ENCODE measurements at regions of chr11 and their contacts with region 1.

Region 1: DNA sequence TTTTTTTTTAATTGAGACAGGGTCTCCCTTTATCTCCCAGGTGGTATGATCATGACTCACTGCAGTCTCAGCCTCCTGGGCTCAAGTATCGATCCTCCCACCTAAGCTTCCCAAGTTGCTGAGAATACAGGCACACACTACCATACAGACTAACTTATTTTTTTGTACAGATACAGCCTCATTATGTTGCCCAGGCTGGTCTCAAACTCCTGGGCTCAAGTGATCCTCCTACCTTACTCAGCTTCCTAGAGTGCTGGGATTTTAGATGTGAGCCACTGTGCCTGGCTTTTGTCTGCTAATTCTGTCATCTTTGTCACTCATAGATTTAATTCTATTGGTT is 43.5 kb downstream of the CBL start:
- DNase-seq: peak; percentile 17
- ATAC-seq: no peak
- H3K4me3 ChIP-seq: no peak overlapping the region
- H3K27ac ChIP-seq: no peak overlapping the region
- H3K4me1 ChIP-seq: peaks cover 5% of the 10 kb centered on the region; the same call in 1 of the 2 replicates
- H3K27me3 ChIP-seq: no peaks in the 10 kb centered on the region
- CTCF ChIP-seq: no peak
- POLR2A ChIP-seq: no peak
- RAD21 ChIP-seq: no peak

Region 2: DNA sequence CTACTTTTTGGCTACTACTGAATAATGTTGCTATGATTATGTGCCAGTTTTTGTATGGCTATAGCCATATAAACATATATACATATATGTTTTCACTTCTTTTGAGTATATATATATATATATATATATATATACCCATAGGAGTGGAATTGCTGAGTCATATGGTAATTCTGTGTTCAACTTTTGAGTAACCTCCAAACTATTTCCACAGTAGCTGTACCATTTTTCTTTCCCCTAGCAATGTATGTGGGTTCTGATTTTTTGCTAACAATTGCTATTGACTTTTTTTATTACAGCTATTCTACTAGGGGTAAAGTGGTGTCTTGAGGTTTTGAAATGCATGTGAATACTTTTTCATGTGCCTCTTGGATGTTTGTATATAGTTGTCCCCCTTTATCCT is 13.2 kb before region 1 on chr11:
- CTCF ChIA-PET with region 1: no interaction called
- POLR2A ChIA-PET with region 1: no interaction called
- dilution Hi-C with region 1: no loop called
- in situ Hi-C with region 1: no loop called
- intact Hi-C with region 1: loop called (anchors 1 kb)
- DNase-seq: peak; percentile 72
- ATAC-seq: peak; percentile 71
- H3K4me3 ChIP-seq: no peak overlapping the region
- H3K27ac ChIP-seq: no peak overlapping the region; the same call in 1 of the 2 replicates
- H3K4me1 ChIP-seq: peaks cover 5% of the 10 kb centered on the region
- H3K27me3 ChIP-seq: no peaks in the 10 kb centered on the region
- CTCF ChIP-seq: no peak
- POLR2A ChIP-seq: no peak
- RAD21 ChIP-seq: no peak

Region 3: DNA sequence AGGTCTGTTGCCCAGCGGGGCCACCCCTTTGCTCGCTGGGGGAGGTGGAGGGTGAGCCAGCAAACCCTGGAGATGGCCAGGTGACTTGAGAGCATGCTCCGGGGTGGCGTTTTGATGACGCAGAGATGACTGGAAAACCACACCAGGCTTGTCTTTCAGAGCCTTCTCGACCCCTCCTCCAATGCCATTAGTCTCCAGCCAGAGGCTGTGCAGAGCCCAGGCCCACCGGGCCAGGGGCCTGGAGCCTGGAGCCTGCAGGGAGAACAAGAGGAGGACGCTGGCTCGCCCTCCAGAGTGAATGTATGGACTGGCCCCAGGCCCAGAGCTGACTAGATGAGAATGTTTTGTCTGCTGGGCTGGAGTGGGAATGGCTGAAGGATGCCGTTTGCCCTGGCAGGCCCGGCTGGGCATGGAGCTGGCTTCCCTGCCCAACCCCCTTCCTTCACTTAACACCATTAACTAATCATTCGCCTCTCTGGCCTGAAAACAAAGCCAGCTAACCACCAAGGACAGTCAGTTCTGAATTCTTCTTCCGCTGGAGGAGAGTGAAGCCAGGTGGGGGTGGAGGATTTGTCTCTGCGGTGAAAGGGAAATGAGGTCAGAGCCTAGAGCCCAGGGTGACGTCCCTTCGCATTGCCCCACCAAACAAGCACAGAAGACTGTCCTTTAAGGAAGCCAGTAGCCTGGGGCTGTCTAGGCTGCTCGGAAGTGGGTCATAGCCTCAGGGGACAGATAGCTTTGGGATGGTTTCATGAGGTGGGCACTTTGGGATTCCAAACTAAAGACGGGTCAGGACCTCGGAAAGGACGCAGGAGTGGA is 68.9 kb after region 1 on chr11:
- CTCF ChIA-PET with region 1: no interaction called
- POLR2A ChIA-PET with region 1: interaction called, 12 read pairs
- dilution Hi-C with region 1: no loop called
- in situ Hi-C with region 1: no loop called
- intact Hi-C with region 1: no loop called
- DNase-seq: peak; percentile 81
- ATAC-seq: peak; percentile 3
- H3K4me3 ChIP-seq: no peak overlapping the region
- H3K27ac ChIP-seq: peak overlapping the region; percentile 38
- H3K4me1 ChIP-seq: peaks cover 49% of the 10 kb centered on the region
- H3K27me3 ChIP-seq: no peaks in the 10 kb centered on the region
- CTCF ChIP-seq: no peak
- POLR2A ChIP-seq: no peak; the same call in 1 of the 2 replicates
- RAD21 ChIP-seq: no peak

Measured in IMR-90 (cell line).